Cardiac septum (tissue), 1 donor: ENCODE measurements at regions of chr1 and their contacts with region 1.

Region 1: DNA sequence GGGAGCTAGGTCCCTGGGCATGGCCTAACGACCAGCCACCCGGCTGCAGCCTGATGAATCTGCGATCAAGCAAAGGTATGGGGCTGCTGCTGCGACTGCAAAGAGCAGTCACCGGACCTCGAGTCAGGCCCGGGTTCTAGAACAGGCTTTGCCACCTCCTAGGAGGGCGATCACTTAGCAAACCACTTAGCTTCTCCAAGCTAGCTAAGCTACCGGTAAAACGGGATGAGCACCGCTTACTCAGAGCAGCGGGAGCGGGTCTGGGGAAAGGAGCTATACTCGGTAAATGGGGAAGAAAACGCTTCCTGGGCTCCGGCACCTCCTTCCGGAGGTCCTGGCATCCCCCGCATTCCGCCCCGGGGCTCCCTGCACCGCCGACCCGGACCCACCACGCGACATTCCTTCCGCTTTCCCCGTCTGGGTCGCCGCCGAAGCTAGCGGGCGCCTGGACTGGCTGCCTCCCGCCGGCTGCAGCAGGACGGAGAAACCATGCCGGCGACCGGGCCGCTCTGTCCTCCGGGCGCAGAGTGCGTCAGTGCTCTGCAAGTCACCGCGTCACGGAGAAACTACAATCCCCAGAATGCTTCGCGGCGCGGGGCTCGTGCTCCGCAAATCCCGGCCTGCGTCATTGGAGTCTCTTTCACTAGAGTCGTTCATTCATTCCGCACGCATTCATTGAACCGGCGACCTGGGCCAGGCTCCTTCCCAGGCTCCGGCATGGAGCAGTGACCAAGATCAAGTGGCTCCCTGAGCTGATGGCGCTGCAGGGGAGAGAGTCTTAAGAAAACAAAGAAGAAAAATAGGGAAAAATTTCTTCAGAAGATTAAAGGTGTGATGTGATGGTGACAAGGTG is at the start of gene LSM10:
- DNase-seq: peak; percentile 97
- total RNA-seq, gene LSM10: 52.7 TPM

Region 2: GRCh38 chr1:36369061-36369861 is 28.3 kb before region 1 on chr1:
- intact Hi-C with region 1: loop called (anchors 5 kb)
- DNase-seq: no peak

Region 3: GRCh38 chr1:36673202-36673601 is 275.6 kb after region 1 on chr1:
- intact Hi-C with region 1: no loop called
- DNase-seq: no peak